ENCODE measurements at regions of chrX and their contacts with region 1.

Region 1: GRCh38 chrX:38166478-38167083 is 54.1 kb downstream of the SRPX start:
- DNase-seq: no peak
- H3K4me3 ChIP-seq: no peak overlapping the region
- H3K27ac ChIP-seq: no peak overlapping the region
- H3K4me1 ChIP-seq: no peaks in the 10 kb centered on the region
- H3K27me3 ChIP-seq: no peaks in the 10 kb centered on the region
- CTCF ChIP-seq: no peak
- EP300 ChIP-seq: no peak
- POLR2A ChIP-seq: no peak

Region 2: GRCh38 chrX:37745354-37745753 is 421.2 kb before region 1 on chrX:
- intact Hi-C with region 1: loop called in 1 of 4 experiments (anchors 10 kb)
- DNase-seq: peak; percentile 39 to 70 (median 65)
- H3K4me3 ChIP-seq: no peak overlapping the region
- H3K27ac ChIP-seq: no peak overlapping the region
- H3K4me1 ChIP-seq: no peaks in the 10 kb centered on the region
- H3K27me3 ChIP-seq: no peaks in the 10 kb centered on the region
- CTCF ChIP-seq: peak; percentile 17 to 54 (median 39)
- EP300 ChIP-seq: no peak
- POLR2A ChIP-seq: no peak

Region 3: GRCh38 chrX:38045538-38046096 is 121.0 kb before region 1 on chrX:
- intact Hi-C with region 1: no loop called
- DNase-seq: peak in 1 of 5 donors; percentile 10
- H3K4me3 ChIP-seq: no peak overlapping the region
- H3K27ac ChIP-seq: no peak overlapping the region
- H3K4me1 ChIP-seq: no peaks in the 10 kb centered on the region
- H3K27me3 ChIP-seq: no peaks in the 10 kb centered on the region
- CTCF ChIP-seq: no peak
- EP300 ChIP-seq: no peak
- POLR2A ChIP-seq: no peak

Measured in ovary (tissue), 10 donors.